Activated CD8-positive, alpha-beta T cell treated with anti-CD3 and anti-CD28 coated beads, Interleukin-2, amount 10 ng/mL, durations not matched to agents 7 days and 5 days (primary cell): ENCODE measurements at regions of chr18 and their contacts with region 1.

Region 1: GRCh38 chr18:74551936-74552555 is 17.7 kb downstream of the CNDP1 start:
- DNase-seq: peak; percentile 87
- ATAC-seq: peak; percentile 98
- H3K4me3 Mint-ChIP-seq: no peak overlapping the region
- H3K27ac Mint-ChIP-seq: no peak overlapping the region
- H3K4me1 Mint-ChIP-seq: peaks cover 5% of the 10 kb centered on the region
- H3K27me3 Mint-ChIP-seq: peaks cover 4% of the 10 kb centered on the region

Region 2: DNA sequence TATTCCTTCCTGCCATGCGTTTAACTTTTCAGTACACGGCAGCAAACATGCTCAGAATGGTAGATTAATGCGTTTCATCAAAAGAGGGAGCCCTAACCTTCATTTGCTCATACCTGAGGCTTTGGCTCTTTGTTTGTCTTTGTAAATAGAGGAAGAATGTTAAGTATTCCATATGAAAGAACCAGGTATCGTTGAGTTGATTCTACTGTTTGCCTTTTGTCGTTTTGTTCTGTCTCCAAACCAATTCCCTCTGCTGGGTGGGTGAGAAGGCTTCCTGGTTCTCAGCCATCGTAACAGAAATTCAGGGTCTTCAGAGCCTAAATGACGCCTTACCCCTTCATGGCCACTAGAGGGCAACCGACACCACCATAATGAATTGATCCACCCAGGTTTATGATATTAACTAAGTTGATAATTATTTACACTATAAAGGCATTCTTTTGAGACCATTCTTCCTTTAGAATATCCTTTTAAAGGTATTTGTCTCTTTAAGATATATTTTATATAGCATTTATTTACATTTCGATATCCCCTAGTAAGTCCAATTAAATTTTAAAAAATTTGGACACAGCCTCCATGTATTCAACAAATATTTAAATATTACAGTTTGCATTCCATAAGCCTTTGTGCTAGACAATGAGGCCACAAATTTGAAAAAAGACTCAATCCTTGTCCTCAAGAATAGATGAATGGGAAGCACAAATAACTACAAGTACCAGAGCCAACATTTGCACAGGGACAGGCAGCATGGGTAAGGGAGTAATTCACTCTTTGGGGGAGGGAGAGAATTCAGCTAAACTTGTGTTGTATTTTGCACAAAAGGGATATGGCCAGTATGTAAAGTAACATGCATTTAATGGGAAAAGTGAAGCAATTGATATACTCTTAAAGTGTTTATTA is 355.6 kb before region 1 on chr18:
- CTCF ChIA-PET with region 1: interaction called, 10 read pairs
- POLR2A ChIA-PET with region 1: no interaction called
- DNase-seq: peak; percentile 67
- ATAC-seq: peak; percentile 92
- H3K4me3 Mint-ChIP-seq: peak overlapping the region; percentile 53
- H3K27ac Mint-ChIP-seq: no peak overlapping the region
- H3K4me1 Mint-ChIP-seq: peaks cover 6% of the 10 kb centered on the region
- H3K27me3 Mint-ChIP-seq: peaks cover 11% of the 10 kb centered on the region

Region 3: DNA sequence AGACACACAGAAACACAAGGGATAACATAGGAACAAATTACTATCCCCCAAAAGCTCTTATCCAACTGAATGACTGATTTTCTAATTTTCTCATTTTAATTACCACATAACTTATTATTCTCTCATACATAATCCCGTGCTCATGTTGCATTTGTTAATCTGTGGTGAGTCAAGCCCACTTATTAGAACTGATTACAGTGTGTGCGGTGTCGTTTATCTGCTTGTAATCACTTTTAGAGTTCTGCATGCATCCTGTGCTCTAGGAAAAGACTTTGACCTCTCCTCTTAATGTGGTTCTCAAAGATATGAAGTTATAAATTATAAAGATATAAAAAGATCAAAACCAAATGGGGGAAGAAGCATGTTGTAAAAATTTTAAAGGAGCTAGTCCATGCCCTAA is 12.0 kb after region 1 on chr18:
- CTCF ChIA-PET with region 1: interaction called, 13 read pairs
- POLR2A ChIA-PET with region 1: no interaction called
- DNase-seq: no peak
- ATAC-seq: no peak
- H3K4me3 Mint-ChIP-seq: no peak overlapping the region
- H3K27ac Mint-ChIP-seq: no peak overlapping the region
- H3K4me1 Mint-ChIP-seq: no peaks in the 10 kb centered on the region
- H3K27me3 Mint-ChIP-seq: peaks cover 9% of the 10 kb centered on the region

Region 4: DNA sequence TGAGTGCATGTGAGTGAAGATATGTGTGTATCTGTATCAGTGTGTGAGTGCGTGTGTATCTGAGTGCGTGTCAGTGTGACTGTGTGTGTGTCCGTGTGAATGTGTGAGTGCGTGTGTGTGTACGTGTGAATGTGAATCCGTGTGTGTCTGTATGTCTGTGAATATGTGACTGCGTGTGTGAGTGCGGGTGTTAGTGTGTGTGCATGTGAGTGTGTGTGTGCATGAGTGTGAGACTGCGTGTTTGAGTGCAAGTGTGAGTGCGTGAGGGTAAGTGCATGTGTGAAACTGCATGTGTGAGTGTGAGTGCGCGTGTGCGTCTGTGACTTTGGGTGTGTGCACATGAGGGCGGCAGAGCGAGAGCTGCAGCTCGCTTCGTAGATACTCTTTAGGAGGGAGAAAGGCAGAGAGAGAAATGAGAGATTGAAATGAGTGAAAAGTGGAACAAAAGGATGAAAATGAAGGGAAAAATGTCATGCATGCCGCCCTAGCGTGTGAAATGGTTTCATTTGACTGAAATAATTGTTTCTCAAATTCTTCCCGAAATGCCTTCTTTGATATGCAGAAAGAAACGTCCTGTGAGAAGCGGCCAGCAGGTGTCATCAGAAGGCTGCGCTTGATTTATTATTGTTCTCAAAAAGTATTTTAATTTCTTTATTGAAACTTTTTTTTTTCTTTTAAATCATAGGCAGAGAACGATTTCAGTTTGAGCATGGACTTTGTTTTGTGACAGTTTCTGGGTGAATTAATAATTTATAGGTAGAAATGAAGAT is 71.2 kb after region 1 on chr18:
- CTCF ChIA-PET with region 1: no interaction called
- POLR2A ChIA-PET with region 1: no interaction called
- DNase-seq: no peak
- ATAC-seq: no peak
- H3K4me3 Mint-ChIP-seq: no peak overlapping the region
- H3K27ac Mint-ChIP-seq: no peak overlapping the region
- H3K4me1 Mint-ChIP-seq: no peaks in the 10 kb centered on the region
- H3K27me3 Mint-ChIP-seq: no peaks in the 10 kb centered on the region